Heart right ventricle (tissue), 16 donors: ENCODE measurements at regions of chr3 and their contacts with region 1.

Region 1: GRCh38 chr3:124812291-124813265 is 74.6 kb downstream of the ITGB5 start:
- DNase-seq: peak; percentile 53 to 71
- ATAC-seq: peak; percentile 72 to 93 (median 88)
- H3K4me3 ChIP-seq: peak overlapping the region in 2 of 10 donors; percentile 2 to 21
- H3K27ac ChIP-seq: peak overlapping the region; percentile 36 to 86 (median 78)
- H3K4me1 ChIP-seq: peaks cover 17 to 66% (median 47%) of the 10 kb centered on the region in 9 donors
- H3K27me3 ChIP-seq: no peaks in the 10 kb centered on the region
- CTCF ChIP-seq: no peak

Region 2: GRCh38 chr3:124772081-124772831 is 40.3 kb before region 1 on chr3:
- intact Hi-C with region 1: loop called in 2 of 10 experiments (anchors 5 kb)
- DNase-seq: peak; percentile 47 to 70
- ATAC-seq: peak; percentile 7 to 65 (median 54)
- H3K4me3 ChIP-seq: no peak overlapping the region
- H3K27ac ChIP-seq: peak overlapping the region; percentile 2 to 83 (median 66)
- H3K4me1 ChIP-seq: peaks cover 17 to 83% (median 71%) of the 10 kb centered on the region in 9 donors
- H3K27me3 ChIP-seq: no peaks in the 10 kb centered on the region
- CTCF ChIP-seq: no peak